RWPE1 (cell line): ENCODE measurements at regions of chr7 and their contacts with region 1.

Region 1: GRCh38 chr7:26090927-26091519 is 61.0 kb upstream of the NFE2L3 start:
- DNase-seq: peak; percentile 57
- H3K27ac ChIP-seq: no peak overlapping the region
- CTCF ChIP-seq: peak; percentile 71

Region 2: DNA sequence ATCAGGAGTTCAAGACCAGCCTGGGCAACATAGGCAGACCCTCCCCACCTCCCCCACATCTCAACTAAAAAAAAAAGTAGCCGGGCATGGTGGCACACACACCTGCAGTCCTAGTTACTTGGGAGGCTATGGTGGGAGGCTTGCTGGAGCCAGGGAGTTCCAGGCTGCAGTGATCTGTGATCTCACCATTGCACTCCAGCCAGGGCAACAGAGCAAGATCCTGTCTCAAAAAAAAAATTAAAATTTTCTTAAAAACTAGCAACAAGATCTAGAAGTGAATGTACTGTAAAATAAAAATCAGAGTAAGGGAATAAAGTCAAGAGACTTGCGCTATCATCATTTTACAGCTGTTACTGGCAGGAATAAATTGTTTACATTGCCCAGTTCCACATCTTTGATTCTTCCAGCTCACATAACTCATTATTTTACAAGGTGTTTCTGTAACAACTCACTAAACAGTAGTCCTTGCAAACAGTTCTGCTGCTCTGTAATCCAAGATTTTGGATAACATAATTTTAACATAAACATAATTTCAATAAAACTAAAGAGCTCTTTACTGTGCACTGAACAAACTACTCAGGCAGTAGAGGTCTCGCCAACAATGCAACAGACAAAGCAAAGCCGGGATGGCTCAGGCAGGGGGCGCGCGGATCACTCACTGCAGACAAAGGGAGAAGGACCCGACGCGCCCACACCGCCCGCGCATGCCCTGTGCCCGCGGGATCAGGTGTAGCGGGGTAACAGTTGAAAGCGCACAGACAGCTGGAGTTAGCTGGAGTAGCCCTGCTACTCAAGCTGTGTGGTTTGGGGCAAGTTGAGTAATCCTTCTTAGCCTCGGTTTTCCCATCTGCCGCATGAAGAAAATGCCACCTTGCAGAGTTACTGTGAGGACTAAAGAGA is 12.3 kb before region 1 on chr7:
- CTCF ChIA-PET with region 1: no interaction called
- POLR2A ChIA-PET with region 1: no interaction called
- DNase-seq: peak; percentile 48
- H3K27ac ChIP-seq: no peak overlapping the region
- CTCF ChIP-seq: peak; percentile 24

Region 3: GRCh38 chr7:26153241-26153822 is 62.3 kb after region 1 on chr7:
- CTCF ChIA-PET with region 1: no interaction called
- POLR2A ChIA-PET with region 1: no interaction called
- DNase-seq: no peak
- H3K27ac ChIP-seq: no peak overlapping the region
- CTCF ChIP-seq: no peak

Region 4: GRCh38 chr7:26187380-26188205 is 96.6 kb after region 1 on chr7:
- CTCF ChIA-PET with region 1: interaction called, 10 read pairs
- POLR2A ChIA-PET with region 1: no interaction called
- DNase-seq: no peak
- H3K27ac ChIP-seq: no peak overlapping the region
- CTCF ChIP-seq: no peak